Dorsolateral prefrontal cortex (tissue), 120 donors: ENCODE measurements at regions of chr10 and their contacts with region 1.

Region 1: GRCh38 chr10:91163269-91163868 is 57.1 kb upstream of the PCGF5 start:
- DNase-seq: peak in 8 of 10 donors; percentile 57 to 78 (median 64)
- H3K4me3 ChIP-seq: peak overlapping the region; percentile 48 to 96 (median 87)
- H3K27ac ChIP-seq: peak overlapping the region; percentile 84 to 100 (median 97)
- H3K27me3 ChIP-seq: no peaks in the 10 kb centered on the region
- CTCF ChIP-seq: peak in 10 of 56 donors; percentile 3 to 22 (median 10)

Region 2: DNA sequence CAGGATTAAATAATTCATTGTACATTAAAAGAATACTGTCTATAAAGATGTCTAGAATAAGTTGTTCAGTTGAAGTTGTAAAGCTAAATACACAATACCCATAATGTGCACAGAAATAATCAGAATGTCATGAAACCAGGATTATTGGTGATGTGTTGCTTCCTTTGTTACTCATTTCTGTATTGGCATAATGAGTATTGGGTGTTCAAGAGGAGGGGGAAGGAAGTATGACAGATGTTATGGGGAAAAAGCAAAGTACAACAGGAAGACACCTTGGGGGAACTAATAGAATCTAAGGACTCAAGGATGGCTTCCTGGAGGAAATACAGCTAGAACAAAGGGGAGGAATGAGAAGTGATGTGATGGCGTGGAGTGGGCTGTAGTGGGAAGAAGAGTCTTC is 257.4 kb before region 1 on chr10:
- intact Hi-C with region 1: loop called in 1 of 2 experiments (anchors 5 kb)
- DNase-seq: no peak
- H3K4me3 ChIP-seq: no peak overlapping the region
- H3K27ac ChIP-seq: no peak overlapping the region
- H3K27me3 ChIP-seq: no peaks in the 10 kb centered on the region
- CTCF ChIP-seq: no peak

Region 3: DNA sequence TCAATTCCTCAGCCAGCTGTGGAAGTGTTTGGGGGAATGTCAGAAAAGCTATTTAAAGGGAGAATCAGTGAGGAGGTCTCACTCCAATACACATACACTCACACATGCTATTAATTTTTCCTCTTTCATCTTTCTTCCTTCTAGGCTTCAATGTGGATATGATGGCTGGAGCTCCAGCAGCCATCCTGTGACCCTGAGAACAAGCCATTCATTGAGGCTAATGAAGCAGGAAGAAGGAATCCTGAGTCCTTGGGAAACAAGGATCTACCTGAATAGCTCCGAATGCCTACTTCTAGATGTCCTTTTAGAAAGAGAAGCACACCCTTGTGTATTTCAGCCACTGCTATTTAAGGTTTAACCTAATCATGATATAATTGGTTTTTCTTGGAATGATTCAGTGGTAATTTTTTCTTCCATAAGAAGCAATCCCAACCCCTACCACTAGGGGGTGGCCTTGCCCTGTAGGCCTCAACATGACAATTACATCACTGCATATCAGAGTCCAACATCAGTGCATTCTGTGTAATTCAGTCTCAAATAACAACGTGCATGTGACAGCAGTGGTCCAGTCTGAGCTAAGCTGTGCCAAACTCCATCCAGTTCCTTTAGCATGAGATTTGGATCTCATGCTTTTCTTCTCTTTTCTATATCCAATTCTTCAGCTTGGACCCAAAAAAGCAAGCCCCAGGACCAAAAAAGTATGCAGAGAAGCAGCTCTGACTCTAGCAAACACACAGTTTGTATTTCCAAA is 157.2 kb before region 1 on chr10:
- intact Hi-C with region 1: loop called (anchors 5 kb)
- DNase-seq: peak in 8 of 10 donors; percentile 16 to 78 (median 51)
- H3K4me3 ChIP-seq: peak overlapping the region in 11 of 59 donors; percentile 0 to 29 (median 10)
- H3K27ac ChIP-seq: peak overlapping the region; percentile 29 to 98 (median 91)
- H3K27me3 ChIP-seq: no peaks in the 10 kb centered on the region
- CTCF ChIP-seq: peak; percentile 85 to 100 (median 96)

Region 4: GRCh38 chr10:91088300-91089140 is 74.8 kb before region 1 on chr10:
- intact Hi-C with region 1: loop called in 1 of 2 experiments (anchors 5 kb)
- DNase-seq: no peak
- H3K4me3 ChIP-seq: no peak overlapping the region
- H3K27ac ChIP-seq: peak overlapping the region in 9 of 59 donors; percentile 8 to 53 (median 32)
- H3K27me3 ChIP-seq: no peaks in the 10 kb centered on the region
- CTCF ChIP-seq: peak in 48 of 56 donors; percentile 13 to 69 (median 43)

Region 5: DNA sequence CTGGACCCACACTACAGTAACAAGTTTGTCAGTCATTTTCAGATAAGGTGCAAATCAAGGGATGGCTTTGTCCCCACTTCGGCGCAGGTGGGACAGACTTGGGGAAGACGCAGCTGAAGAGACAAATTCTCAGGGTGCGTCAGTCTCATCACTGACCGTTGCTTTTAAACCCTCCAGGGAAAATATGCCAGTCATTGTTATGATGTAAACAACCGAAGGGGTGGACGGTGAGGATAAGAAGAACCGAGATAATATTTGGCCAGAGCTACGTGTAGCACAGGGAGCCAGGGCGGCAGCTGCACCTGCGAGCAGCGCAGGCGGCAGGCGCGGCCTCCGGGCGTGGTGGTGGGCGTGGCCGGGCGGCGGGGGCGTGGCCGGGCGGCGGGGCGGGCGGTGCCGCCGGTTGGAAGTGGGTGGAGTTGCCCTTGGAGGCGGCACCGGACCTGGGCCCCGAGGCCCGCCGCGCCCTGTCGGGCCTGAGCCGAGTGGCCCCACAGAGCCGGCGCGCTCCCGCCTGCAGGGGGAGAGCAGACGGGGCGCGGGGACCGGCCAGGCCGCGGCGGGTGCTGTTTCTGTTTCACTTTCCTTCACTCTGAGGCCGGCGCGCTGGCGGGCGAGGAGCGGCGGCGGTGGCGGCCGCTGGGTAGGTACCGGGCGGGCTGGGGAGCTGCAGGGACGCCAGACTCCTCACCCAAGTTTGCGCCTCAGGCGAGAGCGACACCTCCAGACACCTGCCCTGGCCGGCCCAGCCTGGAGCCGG is 57.0 kb after region 1 on chr10 and contains the start of gene PCGF5:
- intact Hi-C with region 1: loop called (anchors 1 to 2 kb)
- DNase-seq: peak; percentile 69 to 92 (median 82)
- H3K4me3 ChIP-seq: peak within 1 kb of the TSS; percentile 57 to 98 (median 85)
- H3K27ac ChIP-seq: peak within 1 kb of the TSS; percentile 53 to 96 (median 89)
- H3K27me3 ChIP-seq: no peaks in the 10 kb centered on the region
- CTCF ChIP-seq: peak in 33 of 56 donors; percentile 3 to 66 (median 34)
- total RNA-seq, gene PCGF5: 51.8 to 95.1 (median 70.1) TPM

Region 6: DNA sequence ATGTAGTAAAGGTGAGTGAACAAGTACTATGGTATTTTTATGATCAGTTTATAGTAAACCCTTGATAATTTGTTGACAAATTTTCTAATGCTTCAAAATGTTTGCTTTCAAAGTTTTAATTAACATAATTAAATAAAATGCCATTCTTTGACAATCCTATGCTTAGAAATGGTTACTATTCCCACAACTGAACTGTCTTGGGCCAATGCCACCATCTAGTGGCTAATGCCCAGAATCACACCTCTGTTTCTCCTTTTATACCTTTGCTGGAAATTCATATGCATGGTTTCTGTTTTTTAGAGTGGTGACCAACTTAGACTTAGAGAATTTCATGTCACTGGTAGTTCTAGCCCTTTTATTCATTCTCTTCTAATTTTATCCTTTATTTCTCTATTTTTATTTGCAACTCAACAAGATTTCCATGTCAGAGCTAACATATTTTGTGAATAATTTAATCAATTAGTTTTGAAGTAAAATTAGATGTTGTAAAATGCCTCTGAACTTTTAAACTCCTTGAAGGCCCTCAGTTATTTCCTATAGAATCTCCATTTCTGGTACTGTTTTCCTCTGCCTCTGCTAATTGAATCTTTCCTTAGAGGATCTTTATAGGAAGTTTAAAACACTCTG is 88.2 kb after region 1 on chr10:
- intact Hi-C with region 1: loop called (anchors 5 kb)
- DNase-seq: peak in 8 of 10 donors; percentile 38 to 74 (median 52)
- H3K4me3 ChIP-seq: no peak overlapping the region
- H3K27ac ChIP-seq: peak overlapping the region in 25 of 59 donors; percentile 1 to 64 (median 41)
- H3K27me3 ChIP-seq: no peaks in the 10 kb centered on the region
- CTCF ChIP-seq: peak; percentile 86 to 99 (median 95)